ENCODE measurements at regions of chr17 and their contacts with region 1.

Region 1: DNA sequence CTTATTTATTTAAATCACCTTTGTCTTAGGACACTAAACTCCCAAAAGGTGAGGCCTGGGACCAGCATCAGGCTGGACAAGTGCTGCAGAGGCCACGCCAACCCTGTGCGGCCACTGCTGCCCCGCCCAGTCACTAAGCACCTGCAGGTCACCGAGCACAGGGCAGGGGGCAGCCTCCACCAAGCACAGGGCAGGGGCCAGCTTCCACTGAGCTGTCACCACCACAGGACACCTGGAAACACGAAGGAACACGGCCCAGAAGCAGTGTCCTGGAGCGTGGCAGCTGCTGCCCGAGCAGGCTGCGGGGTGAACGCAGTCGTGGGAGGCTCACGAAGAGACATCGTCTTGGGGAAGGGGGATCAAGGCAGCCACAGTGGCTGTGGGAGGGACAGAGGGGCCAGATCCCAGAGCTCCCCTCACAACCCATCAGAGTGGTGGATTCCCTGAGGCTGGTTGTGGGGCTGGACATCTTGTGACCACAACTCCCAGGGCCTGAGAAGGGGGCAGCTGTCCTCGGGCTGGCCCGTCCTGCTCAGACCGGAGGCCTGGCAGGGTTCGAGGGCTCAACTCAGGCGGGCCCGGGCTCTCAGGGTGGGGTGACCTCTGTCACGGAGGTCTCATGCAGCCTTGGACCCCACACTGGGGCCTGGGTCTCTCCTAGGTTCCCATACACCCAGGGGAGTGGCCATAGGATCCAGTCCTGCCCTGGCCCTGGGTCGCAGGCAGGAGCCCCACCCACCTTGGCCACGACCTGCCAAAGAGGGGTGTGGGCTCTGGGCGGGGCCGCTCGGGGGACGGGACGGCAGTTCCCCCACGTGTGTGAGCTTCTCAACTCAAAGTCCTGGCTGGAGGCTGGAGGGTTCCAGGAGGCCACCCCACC is 18.7 kb downstream of the RAB40B start:
- DNase-seq: no peak
- ATAC-seq: peak; percentile 85
- H3K4me3 ChIP-seq: no peak overlapping the region
- H3K27ac ChIP-seq: no peak overlapping the region
- H3K4me1 ChIP-seq: no peaks in the 10 kb centered on the region
- H3K27me3 ChIP-seq: no peaks in the 10 kb centered on the region
- CTCF ChIP-seq: no peak

Region 2: GRCh38 chr17:82702231-82702927 is 22.6 kb after region 1 on chr17:
- CTCF ChIA-PET with region 1: interaction called, 10 read pairs
- POLR2A ChIA-PET with region 1: no interaction called
- in situ Hi-C with region 1: no loop called
- intact Hi-C with region 1: no loop called
- DNase-seq: no peak
- ATAC-seq: no peak
- H3K4me3 ChIP-seq: no peak overlapping the region
- H3K27ac ChIP-seq: no peak overlapping the region
- H3K4me1 ChIP-seq: 0 out of 2 replicates have a peak, but pooled peaks cover 3% of the 10 kb centered on the region
- H3K27me3 ChIP-seq: no peaks in the 10 kb centered on the region; the same call in 1 of the 2 replicates
- CTCF ChIP-seq: no peak